GM12878 (cell line): ENCODE measurements at regions of chr2 and their contacts with region 1.

Region 1: DNA sequence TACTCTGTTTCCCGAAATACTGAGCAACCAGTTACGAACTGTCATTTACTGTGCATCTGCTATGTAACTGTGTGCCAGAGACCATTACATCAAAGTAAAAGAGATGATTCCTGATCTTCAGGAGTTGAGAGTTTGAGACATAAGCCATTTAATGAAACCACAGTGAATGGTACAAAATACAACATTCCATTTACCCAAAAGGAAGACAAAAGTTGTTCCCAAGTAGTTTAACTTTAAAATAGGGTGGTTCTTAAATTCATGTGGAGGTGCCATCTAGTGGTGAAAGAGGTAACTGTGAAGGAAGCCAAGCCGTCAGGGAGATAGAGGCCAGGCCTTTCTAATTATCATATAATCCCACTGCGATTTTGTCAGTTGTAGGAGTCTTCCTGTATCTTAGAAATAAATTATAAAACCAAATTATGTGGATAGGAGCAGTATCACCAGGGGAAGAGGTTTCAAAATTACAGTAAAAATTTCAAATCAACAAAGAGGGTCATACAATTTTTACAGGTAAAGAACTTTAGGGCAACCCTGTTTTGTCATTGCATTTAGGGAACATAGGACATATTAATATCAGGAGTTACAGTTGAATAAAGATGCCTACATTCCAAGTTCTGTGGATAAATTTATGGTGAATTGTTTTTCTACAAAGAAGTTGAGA is 67.7 kb downstream of the EPAS1 start:
- DNase-seq: no peak
- ATAC-seq: peak; percentile 79
- H3K4me3 ChIP-seq: no peak overlapping the region
- H3K27ac ChIP-seq: no peak overlapping the region
- H3K4me1 ChIP-seq: no peaks in the 10 kb centered on the region
- H3K27me3 ChIP-seq: peaks cover 0 to 7% of the 10 kb centered on the region in 2 experiments; a peak in 2 of 4 replicates
- CTCF ChIP-seq: peak; percentile 65 to 79 (median 78)
- EP300 ChIP-seq: no peak
- POLR2A ChIP-seq: no peak
- RAD21 ChIP-seq: peak; percentile 81

Region 2: DNA sequence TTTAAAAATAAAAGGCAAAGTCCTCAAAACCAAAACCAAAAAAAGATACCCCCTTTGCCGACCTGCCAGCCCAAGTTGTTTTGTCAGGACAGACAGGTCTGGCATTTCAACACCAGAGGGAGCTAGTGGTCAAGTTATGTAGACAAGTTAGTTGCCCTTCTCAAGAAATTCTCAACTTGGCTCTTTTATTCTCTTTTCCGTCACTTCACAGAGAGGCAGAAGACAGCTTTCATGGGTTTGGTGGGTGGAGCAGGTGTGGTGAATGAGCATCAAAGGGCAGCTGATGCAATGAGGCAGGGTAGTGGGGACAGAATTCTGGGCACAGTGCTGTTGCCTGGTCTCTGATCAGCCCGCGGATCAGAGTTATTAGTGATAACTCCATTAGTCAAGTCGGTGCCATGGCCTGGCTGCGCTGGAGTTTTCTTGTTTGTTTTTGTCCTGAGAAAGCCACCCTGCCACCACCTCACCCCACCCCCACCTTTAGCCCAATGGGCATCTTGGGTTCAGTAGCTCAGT is 371.4 kb before region 1 on chr2:
- CTCF ChIA-PET with region 1: interaction called, 4 read pairs
- POLR2A ChIA-PET with region 1: no interaction called
- RAD21 ChIA-PET with region 1: interaction called, 4 read pairs
- SMC1A ChIA-PET with region 1: interaction called, 4 read pairs
- in situ Hi-C with region 1: no loop called
- intact Hi-C with region 1: loop called (anchors 1 kb)
- DNase-seq: peak; percentile 23
- ATAC-seq: peak; percentile 90
- H3K4me3 ChIP-seq: no peak overlapping the region
- H3K27ac ChIP-seq: no peak overlapping the region
- H3K4me1 ChIP-seq: no peaks in the 10 kb centered on the region
- H3K27me3 ChIP-seq: no peaks in the 10 kb centered on the region
- CTCF ChIP-seq: peak; percentile 72 to 79 (median 79)
- EP300 ChIP-seq: no peak
- POLR2A ChIP-seq: no peak
- RAD21 ChIP-seq: peak; percentile 81

Region 3: DNA sequence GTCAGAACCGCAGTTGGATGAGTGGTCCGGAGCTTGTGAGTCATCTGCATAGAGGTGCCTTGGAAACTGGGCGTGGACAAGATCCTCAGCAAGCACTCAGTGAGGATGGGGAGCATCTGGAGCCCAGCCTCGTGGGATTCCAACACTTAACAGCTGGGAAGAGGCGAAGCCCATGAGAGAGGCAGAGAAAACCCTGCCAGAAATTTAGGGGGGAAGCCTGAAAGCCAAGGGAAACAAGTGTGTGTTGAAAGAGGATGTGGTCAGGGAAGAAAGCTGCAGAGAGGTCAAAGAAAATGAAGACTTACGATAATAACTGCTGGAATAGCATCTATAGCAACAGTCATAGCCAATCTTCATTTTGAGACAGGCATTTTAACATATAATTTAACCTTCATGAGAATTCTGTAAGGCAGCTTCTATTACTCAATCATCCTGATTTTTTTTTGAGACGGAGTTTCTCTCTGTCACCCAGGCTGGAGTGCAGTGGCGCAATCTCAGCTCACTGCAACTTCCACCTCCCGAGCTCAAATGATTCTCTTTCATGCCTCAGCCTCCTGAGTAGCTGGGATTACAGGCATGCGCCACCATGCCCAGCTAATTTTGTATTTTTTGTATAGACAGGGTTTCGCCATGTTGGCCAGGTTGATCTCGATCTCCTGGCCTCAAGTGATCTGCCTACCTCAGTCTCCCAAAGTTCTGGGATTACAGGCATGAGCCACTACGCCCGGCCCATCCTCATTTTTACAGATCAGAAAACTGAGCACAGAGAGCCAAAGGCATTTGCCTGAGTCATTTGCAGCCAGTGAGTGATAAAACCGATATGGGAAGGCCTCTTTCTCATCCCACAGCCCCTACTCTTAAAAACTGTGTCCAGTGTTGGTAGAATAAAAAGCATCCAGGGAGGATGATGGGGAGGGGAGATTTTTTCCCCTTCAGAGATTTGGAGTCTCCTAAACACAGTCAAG is 282.1 kb before region 1 on chr2:
- CTCF ChIA-PET with region 1: interaction called, 20 read pairs
- POLR2A ChIA-PET with region 1: no interaction called
- RAD21 ChIA-PET with region 1: interaction called, 11 read pairs
- SMC1A ChIA-PET with region 1: interaction called, 8 read pairs
- in situ Hi-C with region 1: no loop called
- intact Hi-C with region 1: loop called (anchors 1 kb)
- DNase-seq: no peak
- ATAC-seq: no peak
- H3K4me3 ChIP-seq: no peak overlapping the region
- H3K27ac ChIP-seq: no peak overlapping the region
- H3K4me1 ChIP-seq: 0 out of 2 replicates have a peak, but pooled peaks cover 3% of the 10 kb centered on the region
- H3K27me3 ChIP-seq: no peaks in the 10 kb centered on the region
- CTCF ChIP-seq: no peak
- EP300 ChIP-seq: no peak
- POLR2A ChIP-seq: no peak
- RAD21 ChIP-seq: no peak

Region 4: GRCh38 chr2:46394649-46395510 is 30.0 kb after region 1 on chr2:
- CTCF ChIA-PET with region 1: no interaction called
- POLR2A ChIA-PET with region 1: no interaction called
- RAD21 ChIA-PET with region 1: interaction called, 3 read pairs
- SMC1A ChIA-PET with region 1: interaction called, 10 read pairs
- in situ Hi-C with region 1: no loop called
- intact Hi-C with region 1: no loop called
- DNase-seq: peak; percentile 4
- ATAC-seq: peak; percentile 53
- H3K4me3 ChIP-seq: no peak overlapping the region
- H3K27ac ChIP-seq: no peak overlapping the region
- H3K4me1 ChIP-seq: no peaks in the 10 kb centered on the region
- H3K27me3 ChIP-seq: peaks cover 0 to 2% of the 10 kb centered on the region in 2 experiments; a peak in 2 of 4 replicates
- CTCF ChIP-seq: no peak
- EP300 ChIP-seq: peak in 1 of 2 experiments; percentile 19; a peak in 1 of 4 replicates
- POLR2A ChIP-seq: no peak
- RAD21 ChIP-seq: no peak